CD8-positive, alpha-beta T cell (primary cell): ENCODE measurements at regions of chr6 and their contacts with region 1.

Region 1: DNA sequence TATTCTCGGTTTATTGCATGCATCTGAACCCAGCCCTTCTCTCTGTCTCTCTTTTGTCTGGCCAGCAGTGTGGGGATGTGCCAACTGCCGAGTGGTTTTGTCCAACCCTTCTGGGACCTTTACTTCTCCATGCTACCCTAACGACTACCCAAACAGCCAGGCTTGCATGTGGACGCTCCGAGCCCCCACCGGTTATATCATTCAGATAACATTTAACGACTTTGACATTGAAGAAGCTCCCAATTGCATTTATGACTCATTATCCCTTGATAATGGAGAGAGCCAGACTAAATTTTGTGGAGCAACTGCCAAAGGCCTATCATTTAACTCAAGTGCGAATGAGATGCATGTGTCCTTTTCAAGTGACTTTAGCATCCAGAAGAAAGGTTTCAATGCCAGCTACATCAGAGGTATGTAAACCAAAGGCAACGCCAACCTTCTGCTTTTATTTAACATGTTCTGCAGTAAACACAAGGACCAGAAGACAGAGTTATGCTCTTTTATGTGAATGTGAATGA is 65.8 kb downstream of the ADGRG6 start:
- DNase-seq: no peak
- ATAC-seq: no peak
- H3K4me3 ChIP-seq: no peak overlapping the region
- H3K4me3 Mint-ChIP-seq: no peak overlapping the region
- H3K27ac ChIP-seq: no peak overlapping the region
- H3K27ac Mint-ChIP-seq: no peak overlapping the region
- H3K4me1 ChIP-seq: no peaks in the 10 kb centered on the region
- H3K4me1 Mint-ChIP-seq: no peaks in the 10 kb centered on the region
- H3K27me3 ChIP-seq: no peaks in the 10 kb centered on the region
- H3K27me3 Mint-ChIP-seq: no peaks in the 10 kb centered on the region
- CTCF ChIP-seq: no peak

Region 2: DNA sequence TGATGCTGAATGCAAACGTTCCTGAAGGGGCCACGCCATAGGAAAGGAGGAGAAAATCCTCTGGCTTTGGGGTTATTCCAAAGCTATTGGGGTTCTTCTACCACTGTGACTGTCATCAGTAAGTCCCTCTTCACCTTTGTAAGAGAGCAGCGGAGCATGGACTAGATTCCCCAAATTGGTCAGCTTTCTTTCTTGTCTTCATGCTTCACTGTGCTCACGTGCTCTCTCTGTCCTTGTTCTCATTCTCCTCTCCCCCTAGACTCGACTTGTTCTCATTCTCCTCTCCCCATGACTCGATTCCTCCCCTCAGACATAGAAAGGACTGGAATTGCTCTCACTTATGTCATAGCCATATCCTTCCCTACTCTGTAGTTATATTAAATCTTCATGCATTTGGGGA is 120.6 kb before region 1 on chr6:
- CTCF ChIA-PET with region 1: no interaction called
- POLR2A ChIA-PET with region 1: no interaction called
- intact Hi-C with region 1: loop called in 1 of 2 experiments (anchors 5 kb)
- DNase-seq: no peak
- ATAC-seq: no peak
- H3K4me3 ChIP-seq: no peak overlapping the region
- H3K4me3 Mint-ChIP-seq: no peak overlapping the region
- H3K27ac ChIP-seq: no peak overlapping the region
- H3K27ac Mint-ChIP-seq: no peak overlapping the region
- H3K4me1 ChIP-seq: no peaks in the 10 kb centered on the region
- H3K4me1 Mint-ChIP-seq: no peaks in the 10 kb centered on the region
- H3K27me3 ChIP-seq: no peaks in the 10 kb centered on the region
- H3K27me3 Mint-ChIP-seq: peaks cover 2% of the 10 kb centered on the region
- CTCF ChIP-seq: no peak

Region 3: GRCh38 chr6:142331075-142331551 is 36.4 kb before region 1 on chr6:
- CTCF ChIA-PET with region 1: no interaction called
- POLR2A ChIA-PET with region 1: no interaction called
- intact Hi-C with region 1: no loop called
- DNase-seq: peak in 4 of 9 experiments; percentile 25 to 73 (median 55)
- ATAC-seq: peak; percentile 94
- H3K4me3 ChIP-seq: no peak overlapping the region
- H3K4me3 Mint-ChIP-seq: no peak overlapping the region
- H3K27ac ChIP-seq: no peak overlapping the region
- H3K27ac Mint-ChIP-seq: peak overlapping the region; percentile 50
- H3K4me1 ChIP-seq: peaks cover 13% of the 10 kb centered on the region
- H3K4me1 Mint-ChIP-seq: peaks cover 18% of the 10 kb centered on the region
- H3K27me3 ChIP-seq: no peaks in the 10 kb centered on the region
- H3K27me3 Mint-ChIP-seq: no peaks in the 10 kb centered on the region
- CTCF ChIP-seq: no peak